GM12878 (cell line): ENCODE measurements at regions of chr16 and their contacts with region 1.

Region 1: DNA sequence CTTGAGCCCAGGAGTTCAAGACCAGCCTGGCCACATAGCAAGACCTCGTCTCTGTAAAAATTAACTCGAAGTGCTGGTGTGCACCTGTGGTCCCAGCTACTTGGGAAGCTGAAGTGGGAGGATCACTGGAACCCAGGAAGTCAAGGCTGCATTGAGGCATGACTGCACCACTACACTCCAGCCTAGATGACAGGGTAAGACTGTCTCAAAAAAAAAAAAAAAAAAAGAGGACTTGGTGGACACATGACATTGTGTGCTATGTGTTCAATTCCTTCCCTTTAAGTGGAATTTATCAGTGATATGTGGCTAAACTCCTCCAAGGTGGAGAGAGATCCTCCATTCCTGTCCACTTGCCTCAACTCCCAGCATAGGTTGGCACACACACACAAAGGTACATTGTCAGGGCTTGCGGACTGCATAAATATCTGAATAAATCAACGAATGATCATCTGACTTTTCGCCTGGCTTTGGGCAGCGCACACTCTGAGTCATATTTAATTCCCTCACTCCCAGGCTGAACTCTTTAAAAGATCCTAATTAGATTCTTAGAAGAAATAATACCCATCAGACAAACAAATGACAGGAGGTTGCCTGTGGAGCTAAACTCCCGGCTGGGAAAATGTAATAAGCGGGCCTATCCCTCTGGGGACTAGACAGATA is 25.0 kb upstream of the SYT17 start:
- DNase-seq: no peak
- ATAC-seq: no peak
- H3K4me3 ChIP-seq: no peak overlapping the region
- H3K27ac ChIP-seq: no peak overlapping the region
- H3K4me1 ChIP-seq: no peaks in the 10 kb centered on the region
- H3K27me3 ChIP-seq: 0 out of 4 replicates have a peak, but pooled peaks cover 0 to 2% of the 10 kb centered on the region in 2 experiments
- CTCF ChIP-seq: no peak
- EP300 ChIP-seq: no peak
- POLR2A ChIP-seq: no peak
- RAD21 ChIP-seq: no peak

Region 2: DNA sequence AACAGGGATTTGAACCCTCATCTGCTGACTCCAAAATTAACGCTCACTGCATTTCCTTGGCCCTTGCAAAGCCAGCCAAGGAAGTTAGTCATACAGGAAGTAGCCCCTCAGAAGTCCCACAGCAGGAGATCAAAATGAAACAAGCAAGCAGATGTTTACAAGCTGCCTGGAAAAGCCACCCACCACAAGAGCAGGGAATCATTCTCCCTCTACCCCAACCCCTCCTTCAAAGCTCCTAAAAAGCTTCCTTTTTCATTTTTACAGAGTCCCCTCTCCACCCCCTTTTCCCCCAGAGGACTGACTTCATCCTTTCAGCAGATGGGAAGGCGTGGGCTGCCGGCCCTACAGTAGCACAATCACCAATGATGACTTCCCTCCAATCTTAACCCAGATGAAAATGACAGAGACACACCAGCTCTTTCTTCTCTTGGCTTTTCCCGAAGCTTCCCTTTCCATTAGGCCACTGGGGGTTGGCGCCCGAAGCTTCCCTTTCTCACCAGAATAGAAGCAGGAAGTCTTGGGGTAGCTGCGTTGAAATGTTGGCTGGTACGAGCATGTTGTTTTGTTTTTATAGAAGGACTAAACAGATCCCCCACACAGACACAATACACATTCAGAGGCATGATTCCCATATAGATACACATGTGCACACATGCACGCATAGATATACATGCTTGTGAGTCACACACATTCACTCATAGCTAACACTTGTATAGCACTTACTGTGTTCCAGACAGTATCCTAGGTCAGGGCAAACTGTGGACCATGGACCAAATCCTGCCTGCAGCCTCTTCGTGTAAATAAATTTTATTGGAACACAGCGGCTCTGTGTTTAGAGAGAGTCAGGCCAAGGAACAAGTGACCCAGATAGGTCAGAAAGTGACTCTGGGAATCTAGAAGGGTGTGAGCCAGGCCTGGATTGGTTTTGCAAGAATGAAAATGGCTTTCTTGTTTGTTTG is 11.9 kb before region 1 on chr16:
- CTCF ChIA-PET with region 1: no interaction called
- POLR2A ChIA-PET with region 1: no interaction called
- RAD21 ChIA-PET with region 1: no interaction called
- SMC1A ChIA-PET with region 1: no interaction called
- in situ Hi-C with region 1: no loop called
- intact Hi-C with region 1: no loop called
- DNase-seq: no peak
- ATAC-seq: peak; percentile 9; the same call in 2 of the 3 replicates
- H3K4me3 ChIP-seq: peak overlapping the region; percentile 10; the same call in 1 of the 2 replicates
- H3K27ac ChIP-seq: peak overlapping the region; percentile 29
- H3K4me1 ChIP-seq: peaks cover 73% of the 10 kb centered on the region
- H3K27me3 ChIP-seq: no peaks in the 10 kb centered on the region
- CTCF ChIP-seq: no peak
- EP300 ChIP-seq: no peak
- POLR2A ChIP-seq: no peak
- RAD21 ChIP-seq: no peak

Region 3: GRCh38 chr16:19179546-19180490 is 36.7 kb after region 1 on chr16:
- CTCF ChIA-PET with region 1: interaction called, 10 read pairs
- POLR2A ChIA-PET with region 1: no interaction called
- RAD21 ChIA-PET with region 1: no interaction called
- SMC1A ChIA-PET with region 1: interaction called, 3 read pairs
- in situ Hi-C with region 1: no loop called
- intact Hi-C with region 1: no loop called
- DNase-seq: no peak
- ATAC-seq: peak; percentile 94
- H3K4me3 ChIP-seq: no peak overlapping the region
- H3K27ac ChIP-seq: no peak overlapping the region
- H3K4me1 ChIP-seq: no peaks in the 10 kb centered on the region
- H3K27me3 ChIP-seq: no peaks in the 10 kb centered on the region
- CTCF ChIP-seq: peak; percentile 61 to 75 (median 68)
- EP300 ChIP-seq: no peak
- POLR2A ChIP-seq: no peak
- RAD21 ChIP-seq: peak; percentile 55

Region 4: GRCh38 chr16:19283637-19284036 is 140.6 kb after region 1 on chr16:
- CTCF ChIA-PET with region 1: no interaction called
- POLR2A ChIA-PET with region 1: no interaction called
- RAD21 ChIA-PET with region 1: no interaction called
- SMC1A ChIA-PET with region 1: no interaction called
- in situ Hi-C with region 1: no loop called
- intact Hi-C with region 1: no loop called
- DNase-seq: no peak
- ATAC-seq: no peak
- H3K4me3 ChIP-seq: no peak overlapping the region
- H3K27ac ChIP-seq: no peak overlapping the region
- H3K4me1 ChIP-seq: no peaks in the 10 kb centered on the region
- H3K27me3 ChIP-seq: no peaks in the 10 kb centered on the region; a peak in 1 of 4 replicates
- CTCF ChIP-seq: no peak
- EP300 ChIP-seq: no peak
- POLR2A ChIP-seq: no peak
- RAD21 ChIP-seq: no peak